Activated CD4-positive, alpha-beta memory T cell treated with anti-CD3 and anti-CD28 coated beads for 36 hours (primary cell): ENCODE measurements at regions of chr17 and their contacts with region 1.

Region 1: GRCh38 chr17:2416010-2416734 is 15.3 kb upstream of the MNT start:
- DNase-seq: peak; percentile 91
- H3K4me3 Mint-ChIP-seq: no peak overlapping the region
- H3K27ac Mint-ChIP-seq: no peak overlapping the region
- H3K4me1 Mint-ChIP-seq: peaks cover 3% of the 10 kb centered on the region
- H3K27me3 Mint-ChIP-seq: no peaks in the 10 kb centered on the region

Region 2: DNA sequence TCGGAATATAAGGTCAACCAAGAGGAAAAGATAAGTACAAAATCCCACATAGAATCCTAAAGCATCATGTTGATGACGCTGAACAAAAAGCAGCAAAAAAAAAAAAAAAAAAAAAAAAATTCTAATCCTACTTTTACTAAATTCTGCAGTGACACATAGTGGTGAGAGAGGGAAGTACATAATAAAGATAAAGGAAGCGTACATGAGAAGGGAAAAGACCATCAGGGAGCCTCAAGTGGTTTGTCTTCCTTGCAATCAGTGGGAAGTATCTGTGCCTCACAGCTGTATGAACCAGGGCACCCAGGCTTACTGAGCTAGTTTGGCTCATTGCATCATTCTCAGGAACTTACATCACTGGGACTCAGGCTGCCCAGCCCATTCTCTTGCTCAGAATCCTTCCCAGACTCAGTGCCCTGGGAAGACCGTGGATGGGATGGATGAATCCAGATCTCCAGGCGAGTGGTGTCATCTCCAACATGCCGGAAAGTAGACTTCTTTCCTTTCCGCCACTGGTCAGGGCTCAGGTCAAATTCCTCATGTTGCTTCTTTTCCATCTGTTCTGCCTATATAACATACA is 133.8 kb before region 1 on chr17:
- CTCF ChIA-PET with region 1: no interaction called
- POLR2A ChIA-PET with region 1: no interaction called
- intact Hi-C with region 1: no loop called
- DNase-seq: no peak
- H3K4me3 Mint-ChIP-seq: no peak overlapping the region
- H3K27ac Mint-ChIP-seq: peak overlapping the region; percentile 33
- H3K4me1 Mint-ChIP-seq: peaks cover 12% of the 10 kb centered on the region
- H3K27me3 Mint-ChIP-seq: no peaks in the 10 kb centered on the region

Region 3: DNA sequence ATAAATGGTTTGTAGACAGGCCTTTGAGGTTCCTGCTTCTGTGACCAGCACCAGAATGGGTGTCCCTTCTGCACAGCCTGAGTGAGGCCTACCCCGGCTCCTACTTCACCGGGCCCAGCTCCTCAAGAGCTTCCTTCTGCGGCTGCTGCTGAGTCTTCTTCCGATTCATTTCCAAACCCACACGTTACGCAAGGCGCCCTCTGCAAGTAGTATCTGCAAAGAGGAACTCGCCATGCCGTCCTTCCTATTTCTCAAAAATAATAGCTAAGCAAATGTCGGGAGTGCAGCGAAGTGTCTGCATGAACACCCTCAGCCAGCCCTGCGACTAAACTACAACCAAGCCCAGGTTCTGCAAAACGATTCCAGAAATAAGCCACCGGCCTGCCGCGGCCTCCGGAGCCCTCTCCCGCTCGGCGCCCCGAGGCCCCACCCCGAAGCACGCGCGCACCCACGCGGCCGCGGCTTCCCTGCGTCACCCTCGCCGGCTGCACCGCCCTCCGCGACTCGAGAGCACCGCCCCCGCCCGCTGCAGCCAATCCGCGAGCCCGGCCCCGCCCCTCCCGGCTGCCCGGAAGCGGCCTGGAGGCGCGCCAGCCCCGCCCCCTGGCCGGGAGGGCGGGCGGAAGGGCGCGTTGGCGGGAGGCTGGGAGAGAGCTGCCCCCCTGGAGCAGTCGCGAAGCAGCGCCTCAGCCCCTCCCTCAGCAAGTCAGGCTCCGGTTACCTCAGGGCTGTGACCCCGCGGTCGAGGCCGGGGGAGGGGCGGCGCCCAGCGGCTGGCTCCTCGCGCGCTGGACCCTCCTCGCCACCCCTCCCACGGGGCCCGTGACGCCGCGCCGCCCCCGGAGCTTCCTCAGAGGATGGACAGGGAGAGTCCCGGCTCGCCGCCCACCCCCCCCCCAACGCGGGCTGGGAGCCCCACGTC is 23.7 kb before region 1 on chr17:
- CTCF ChIA-PET with region 1: interaction called, 52 read pairs
- POLR2A ChIA-PET with region 1: no interaction called
- intact Hi-C with region 1: no loop called
- DNase-seq: peak; percentile 98
- H3K4me3 Mint-ChIP-seq: peak overlapping the region; percentile 88
- H3K27ac Mint-ChIP-seq: peak overlapping the region; percentile 93
- H3K4me1 Mint-ChIP-seq: peaks cover 54% of the 10 kb centered on the region
- H3K27me3 Mint-ChIP-seq: no peaks in the 10 kb centered on the region

Region 4: DNA sequence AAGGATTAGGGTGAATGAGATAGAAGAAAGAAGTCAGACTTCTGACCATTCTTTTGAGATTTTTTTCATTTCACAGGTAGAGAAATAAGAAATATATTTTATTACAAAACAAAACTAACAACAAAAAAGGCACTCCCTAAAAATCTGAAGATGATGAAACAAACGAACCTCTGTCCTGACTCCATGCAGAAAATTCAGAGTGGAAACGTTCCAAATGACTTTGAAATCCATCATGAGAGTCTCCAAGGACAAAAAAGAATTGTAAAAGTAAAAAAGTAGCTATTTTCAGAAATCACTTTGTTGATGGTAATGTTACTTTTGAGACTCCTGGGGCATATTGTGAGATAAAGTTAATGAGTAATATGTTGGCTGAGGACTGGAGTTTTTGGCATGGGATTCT is 11.0 kb after region 1 on chr17:
- CTCF ChIA-PET with region 1: interaction called, 32 read pairs
- POLR2A ChIA-PET with region 1: no interaction called
- intact Hi-C with region 1: no loop called
- DNase-seq: no peak
- H3K4me3 Mint-ChIP-seq: no peak overlapping the region
- H3K27ac Mint-ChIP-seq: no peak overlapping the region
- H3K4me1 Mint-ChIP-seq: no peaks in the 10 kb centered on the region
- H3K27me3 Mint-ChIP-seq: no peaks in the 10 kb centered on the region

Region 5: GRCh38 chr17:2435181-2435741 is 19.1 kb after region 1 on chr17:
- CTCF ChIA-PET with region 1: interaction called, 32 read pairs
- POLR2A ChIA-PET with region 1: no interaction called
- intact Hi-C with region 1: no loop called
- DNase-seq: no peak
- H3K4me3 Mint-ChIP-seq: no peak overlapping the region
- H3K27ac Mint-ChIP-seq: no peak overlapping the region
- H3K4me1 Mint-ChIP-seq: peaks cover 13% of the 10 kb centered on the region
- H3K27me3 Mint-ChIP-seq: no peaks in the 10 kb centered on the region

Region 6: DNA sequence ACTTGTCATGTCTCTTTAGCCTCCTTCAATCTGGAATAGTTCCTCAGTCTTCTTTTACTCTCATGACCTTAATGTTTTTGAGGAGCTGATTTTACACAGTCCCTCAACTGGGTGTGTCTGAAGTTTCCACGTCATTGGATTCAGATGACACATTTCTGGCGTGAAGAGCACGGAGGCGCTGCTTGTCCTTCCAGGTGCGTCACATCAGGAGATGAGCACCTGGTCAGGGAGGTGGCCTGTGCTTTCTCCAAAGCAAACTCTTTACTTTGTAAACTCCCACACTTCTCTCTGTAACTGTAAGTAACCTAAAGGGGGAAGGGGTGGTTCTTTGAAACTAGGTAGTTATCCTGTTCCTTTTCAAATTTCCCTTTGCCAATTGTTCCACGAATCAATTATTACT is 37.2 kb after region 1 on chr17:
- CTCF ChIA-PET with region 1: interaction called, 14 read pairs
- POLR2A ChIA-PET with region 1: no interaction called
- intact Hi-C with region 1: no loop called
- DNase-seq: peak; percentile 37
- H3K4me3 Mint-ChIP-seq: no peak overlapping the region
- H3K27ac Mint-ChIP-seq: peak overlapping the region; percentile 15
- H3K4me1 Mint-ChIP-seq: peaks cover 23% of the 10 kb centered on the region
- H3K27me3 Mint-ChIP-seq: no peaks in the 10 kb centered on the region

Region 7: GRCh38 chr17:2511462-2512369 is 95.5 kb after region 1 on chr17 and contains the start of gene METTL16:
- CTCF ChIA-PET with region 1: interaction called, 13 read pairs
- POLR2A ChIA-PET with region 1: interaction called, 3 read pairs
- intact Hi-C with region 1: no loop called
- DNase-seq: peak; percentile 99
- H3K4me3 Mint-ChIP-seq: no peak within 1 kb of the TSS
- H3K27ac Mint-ChIP-seq: no peak within 1 kb of the TSS
- H3K4me1 Mint-ChIP-seq: peaks cover 11% of the 10 kb centered on the region
- H3K27me3 Mint-ChIP-seq: no peaks in the 10 kb centered on the region
- total RNA-seq, gene METTL16: 44.0 to 44.6 TPM

Region 8: GRCh38 chr17:2542456-2542855 is 126.3 kb after region 1 on chr17:
- CTCF ChIA-PET with region 1: no interaction called
- POLR2A ChIA-PET with region 1: no interaction called
- intact Hi-C with region 1: no loop called
- DNase-seq: no peak
- H3K4me3 Mint-ChIP-seq: no peak overlapping the region
- H3K27ac Mint-ChIP-seq: no peak overlapping the region
- H3K4me1 Mint-ChIP-seq: no peaks in the 10 kb centered on the region
- H3K27me3 Mint-ChIP-seq: peaks cover 1% of the 10 kb centered on the region

Region 9: GRCh38 chr17:2592971-2593820 is 177.0 kb after region 1 on chr17 and contains the start of gene PAFAH1B1:
- CTCF ChIA-PET with region 1: interaction called, 13 read pairs
- POLR2A ChIA-PET with region 1: no interaction called
- intact Hi-C with region 1: no loop called
- DNase-seq: peak; percentile 96
- H3K4me3 Mint-ChIP-seq: peak within 1 kb of the TSS; percentile 91
- H3K27ac Mint-ChIP-seq: peak within 1 kb of the TSS; percentile 83
- H3K4me1 Mint-ChIP-seq: peaks cover 27% of the 10 kb centered on the region
- H3K27me3 Mint-ChIP-seq: no peaks in the 10 kb centered on the region
- total RNA-seq, gene PAFAH1B1: 170 to 173 TPM

Region 10: DNA sequence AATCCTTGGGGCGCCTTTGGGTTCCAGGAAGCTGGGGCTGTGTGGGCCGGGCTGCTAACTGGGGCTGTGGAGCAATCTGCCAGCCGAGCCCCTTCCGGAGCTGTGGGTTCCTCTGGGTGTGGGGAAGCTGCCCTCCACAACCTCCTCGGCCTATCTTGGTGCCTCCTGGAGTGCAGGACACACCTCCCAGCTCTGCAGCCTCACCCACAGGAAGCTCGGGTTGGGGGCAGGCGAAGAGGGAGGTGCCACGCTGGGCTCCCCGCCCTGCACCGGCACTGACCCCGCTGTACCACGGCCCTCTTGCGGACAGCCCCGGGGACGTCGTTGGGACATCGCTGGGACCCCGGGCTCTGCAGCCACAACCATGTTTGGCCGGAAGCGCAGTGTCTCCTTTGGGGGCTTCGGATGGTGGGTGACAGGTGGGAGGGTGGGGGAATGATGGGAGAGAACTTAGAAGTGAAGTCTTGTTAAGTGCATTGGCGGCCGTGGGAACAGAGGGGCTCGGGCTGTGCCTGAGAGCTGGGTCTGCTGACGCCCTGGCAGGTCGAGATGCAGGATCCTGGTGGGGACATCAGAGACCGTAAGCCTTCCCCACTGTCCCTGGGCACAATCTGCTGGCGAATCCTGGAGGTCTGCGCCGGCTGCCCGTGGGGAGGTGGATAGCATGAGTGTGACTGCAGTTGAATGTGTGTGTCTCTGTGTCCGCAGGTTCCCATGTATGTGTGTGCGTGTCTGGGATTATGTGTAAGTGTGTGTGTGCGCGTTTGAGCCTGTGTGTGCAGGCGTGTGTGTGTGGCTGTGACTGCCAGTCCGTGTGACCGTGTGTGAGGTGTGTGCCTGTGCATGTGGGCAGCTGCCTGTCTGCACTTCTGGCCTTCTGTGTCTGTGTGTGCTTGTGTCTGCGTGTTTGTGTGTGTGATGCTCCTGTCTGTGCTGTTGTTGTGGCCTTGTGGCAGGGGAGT is 380.3 kb after region 1 on chr17 and contains the start of gene RAP1GAP2:
- CTCF ChIA-PET with region 1: no interaction called
- POLR2A ChIA-PET with region 1: no interaction called
- intact Hi-C with region 1: no loop called
- DNase-seq: peak; percentile 80
- H3K4me3 Mint-ChIP-seq: peak within 1 kb of the TSS; percentile 74
- H3K27ac Mint-ChIP-seq: no peak within 1 kb of the TSS
- H3K4me1 Mint-ChIP-seq: peaks cover 66% of the 10 kb centered on the region
- H3K27me3 Mint-ChIP-seq: peaks cover 17% of the 10 kb centered on the region
- total RNA-seq, gene RAP1GAP2: 1.9 to 2.3 TPM